Colonic mucosa (tissue), 4 donors: ENCODE measurements at regions of chr20 and their contacts with region 1.

Region 1: DNA sequence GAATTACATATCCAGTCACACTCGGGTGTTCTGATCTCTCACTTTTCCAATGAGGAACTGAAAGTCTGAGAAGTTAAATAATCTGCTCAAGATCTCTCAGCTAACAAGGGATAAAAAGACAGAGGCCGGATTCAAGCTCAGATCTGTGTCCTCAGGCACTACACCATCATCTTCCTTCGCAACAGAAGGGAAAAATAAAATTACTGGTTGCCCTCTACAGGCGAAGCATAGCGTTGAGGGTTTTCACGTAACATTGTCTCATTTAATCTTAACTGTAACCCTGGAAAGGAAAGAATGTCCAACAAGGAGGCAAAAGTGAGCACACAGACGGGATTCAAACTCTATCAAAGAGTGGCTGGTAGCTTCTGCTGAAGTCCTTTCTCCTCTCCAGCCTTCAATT is 67.8 kb upstream of the ANKEF1 start:
- DNase-seq: no peak
- H3K4me3 ChIP-seq: no peak overlapping the region
- H3K27ac ChIP-seq: no peak overlapping the region
- H3K4me1 ChIP-seq: no peaks in the 10 kb centered on the region
- H3K27me3 ChIP-seq: no peaks in the 10 kb centered on the region
- CTCF ChIP-seq: no peak

Region 2: GRCh38 chr20:9286501-9287461 is 680.2 kb before region 1 on chr20:
- intact Hi-C with region 1: no loop called
- DNase-seq: no peak
- H3K4me3 ChIP-seq: no peak overlapping the region
- H3K27ac ChIP-seq: no peak overlapping the region
- H3K4me1 ChIP-seq: no peaks in the 10 kb centered on the region
- H3K27me3 ChIP-seq: no peaks in the 10 kb centered on the region
- CTCF ChIP-seq: no peak

Region 3: GRCh38 chr20:10090588-10091166 is 123.7 kb after region 1 on chr20:
- intact Hi-C with region 1: loop called (anchors 2 kb)
- DNase-seq: peak; percentile 36
- H3K4me3 ChIP-seq: no peak overlapping the region
- H3K27ac ChIP-seq: no peak overlapping the region
- H3K4me1 ChIP-seq: no peaks in the 10 kb centered on the region
- H3K27me3 ChIP-seq: no peaks in the 10 kb centered on the region
- CTCF ChIP-seq: peak; percentile 71